ENCODE measurements at regions of chr6 and their contacts with region 1.

Region 1: GRCh38 chr6:109073344-109074132 is 21.1 kb downstream of the SESN1 start:
- DNase-seq: peak; percentile 67 to 74 (median 71)
- H3K4me3 ChIP-seq: no peak overlapping the region
- H3K4me3 Mint-ChIP-seq: peak overlapping the region in 6 of 8 donors; percentile 20 to 71 (median 51)
- H3K27ac ChIP-seq: no peak overlapping the region
- H3K27ac Mint-ChIP-seq: peak overlapping the region in 4 of 7 donors; percentile 1 to 72 (median 34)
- H3K4me1 ChIP-seq: peaks cover 34% of the 10 kb centered on the region
- H3K4me1 Mint-ChIP-seq: peaks cover 24 to 39% (median 34%) of the 10 kb centered on the region in 4 donors
- H3K27me3 ChIP-seq: no peaks in the 10 kb centered on the region
- H3K27me3 Mint-ChIP-seq: no peaks in the 10 kb centered on the region

Region 2: GRCh38 chr6:108222504-108222903 is 851.0 kb before region 1 on chr6:
- CTCF ChIA-PET with region 1: no interaction called
- POLR2A ChIA-PET with region 1: no interaction called
- intact Hi-C with region 1: no loop called
- DNase-seq: no peak
- H3K4me3 ChIP-seq: no peak overlapping the region
- H3K4me3 Mint-ChIP-seq: no peak overlapping the region
- H3K27ac ChIP-seq: no peak overlapping the region
- H3K27ac Mint-ChIP-seq: peak overlapping the region in 3 of 7 donors; percentile 7 to 75 (median 64)
- H3K4me1 ChIP-seq: no peaks in the 10 kb centered on the region
- H3K4me1 Mint-ChIP-seq: peaks cover 7 to 14% (median 10%) of the 10 kb centered on the region in 4 donors
- H3K27me3 ChIP-seq: no peaks in the 10 kb centered on the region
- H3K27me3 Mint-ChIP-seq: no peaks in the 10 kb centered on the region

Region 3: GRCh38 chr6:108541838-108542759 is 531.4 kb before region 1 on chr6:
- CTCF ChIA-PET with region 1: interaction called, 219 read pairs
- POLR2A ChIA-PET with region 1: interaction called, 10 read pairs
- intact Hi-C with region 1: loop called (anchors 1 kb)
- DNase-seq: peak; percentile 71 to 74 (median 73)
- H3K4me3 ChIP-seq: no peak overlapping the region
- H3K4me3 Mint-ChIP-seq: peak overlapping the region in 4 of 8 donors; percentile 16 to 71 (median 56)
- H3K27ac ChIP-seq: no peak overlapping the region
- H3K27ac Mint-ChIP-seq: no peak overlapping the region
- H3K4me1 ChIP-seq: peaks cover 8% of the 10 kb centered on the region
- H3K4me1 Mint-ChIP-seq: peaks cover 6 to 17% (median 8%) of the 10 kb centered on the region in 4 donors
- H3K27me3 ChIP-seq: no peaks in the 10 kb centered on the region
- H3K27me3 Mint-ChIP-seq: peaks cover 4 to 6% of the 10 kb centered on the region in 2 donors

Region 4: DNA sequence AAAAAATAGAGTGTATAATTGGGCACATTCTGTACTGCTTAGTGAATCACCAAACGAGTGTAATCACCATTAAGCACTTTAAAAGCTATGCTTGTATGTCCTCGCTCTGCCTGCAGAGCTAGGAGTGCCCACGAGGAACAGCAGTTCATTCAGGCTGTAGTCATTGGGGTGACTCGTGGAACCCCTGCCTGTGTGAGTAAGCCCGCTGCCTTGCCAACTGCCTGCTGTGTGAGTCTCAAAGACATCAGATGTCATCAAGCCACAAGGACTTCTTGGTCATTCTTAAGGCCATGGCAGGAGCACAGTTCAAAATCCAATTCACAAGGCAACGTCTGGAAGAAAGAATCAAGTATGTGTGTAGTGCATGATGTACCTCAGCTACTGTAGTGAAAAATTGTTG is 452.4 kb before region 1 on chr6:
- CTCF ChIA-PET with region 1: no interaction called
- POLR2A ChIA-PET with region 1: no interaction called
- intact Hi-C with region 1: no loop called
- DNase-seq: no peak
- H3K4me3 ChIP-seq: no peak overlapping the region
- H3K4me3 Mint-ChIP-seq: no peak overlapping the region
- H3K27ac ChIP-seq: no peak overlapping the region
- H3K27ac Mint-ChIP-seq: no peak overlapping the region
- H3K4me1 ChIP-seq: peaks cover 17% of the 10 kb centered on the region
- H3K4me1 Mint-ChIP-seq: peaks cover 28 to 72% (median 47%) of the 10 kb centered on the region in 4 donors
- H3K27me3 ChIP-seq: no peaks in the 10 kb centered on the region
- H3K27me3 Mint-ChIP-seq: no peaks in the 10 kb centered on the region

Region 5: GRCh38 chr6:108835218-108835850 is 238.2 kb before region 1 on chr6:
- CTCF ChIA-PET with region 1: interaction called, 40 read pairs
- POLR2A ChIA-PET with region 1: no interaction called
- intact Hi-C with region 1: loop called (anchors 1 kb)
- DNase-seq: peak; percentile 76 to 78 (median 77)
- H3K4me3 ChIP-seq: no peak overlapping the region
- H3K4me3 Mint-ChIP-seq: no peak overlapping the region
- H3K27ac ChIP-seq: no peak overlapping the region
- H3K27ac Mint-ChIP-seq: peak overlapping the region in 2 of 7 donors; percentile 3 to 43
- H3K4me1 ChIP-seq: peaks cover 15% of the 10 kb centered on the region
- H3K4me1 Mint-ChIP-seq: peaks cover 13 to 26% (median 19%) of the 10 kb centered on the region in 4 donors
- H3K27me3 ChIP-seq: no peaks in the 10 kb centered on the region
- H3K27me3 Mint-ChIP-seq: no peaks in the 10 kb centered on the region

Region 6: DNA sequence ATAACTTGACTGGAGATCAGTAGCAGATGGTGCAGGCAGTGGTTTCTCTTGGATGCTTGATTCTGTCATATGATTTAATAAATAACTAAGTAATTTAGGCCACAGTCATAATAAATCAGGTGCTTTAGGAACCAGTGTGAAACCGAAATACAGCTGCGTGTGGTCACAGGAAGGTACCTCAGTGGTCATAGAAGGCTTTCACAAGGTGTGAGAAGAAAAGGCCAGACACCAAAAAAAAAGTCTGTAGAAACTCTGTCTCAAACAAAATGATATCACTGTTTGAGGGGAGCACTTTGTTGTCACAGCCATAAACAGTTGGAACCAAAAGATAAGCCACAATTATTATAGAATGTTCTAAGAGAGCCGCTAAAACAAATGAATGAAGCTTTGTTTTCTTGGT is 168.8 kb before region 1 on chr6:
- CTCF ChIA-PET with region 1: interaction called, 12 read pairs
- POLR2A ChIA-PET with region 1: interaction called, 3 read pairs
- intact Hi-C with region 1: no loop called
- DNase-seq: no peak
- H3K4me3 ChIP-seq: no peak overlapping the region
- H3K4me3 Mint-ChIP-seq: no peak overlapping the region
- H3K27ac ChIP-seq: no peak overlapping the region
- H3K27ac Mint-ChIP-seq: peak overlapping the region in 2 of 7 donors; percentile 6 to 90
- H3K4me1 ChIP-seq: peaks cover 26% of the 10 kb centered on the region
- H3K4me1 Mint-ChIP-seq: peaks cover 22 to 35% (median 27%) of the 10 kb centered on the region in 4 donors
- H3K27me3 ChIP-seq: no peaks in the 10 kb centered on the region
- H3K27me3 Mint-ChIP-seq: no peaks in the 10 kb centered on the region

Region 7: GRCh38 chr6:108944707-108945680 is 128.5 kb before region 1 on chr6:
- CTCF ChIA-PET with region 1: interaction called, 16 read pairs
- POLR2A ChIA-PET with region 1: interaction called, 3 read pairs
- intact Hi-C with region 1: no loop called
- DNase-seq: no peak
- H3K4me3 ChIP-seq: no peak overlapping the region
- H3K4me3 Mint-ChIP-seq: peak overlapping the region in 3 of 8 donors; percentile 3 to 40 (median 15)
- H3K27ac ChIP-seq: no peak overlapping the region
- H3K27ac Mint-ChIP-seq: peak overlapping the region in 5 of 7 donors; percentile 3 to 24 (median 7)
- H3K4me1 ChIP-seq: peaks cover 37% of the 10 kb centered on the region
- H3K4me1 Mint-ChIP-seq: peaks cover 22 to 66% (median 38%) of the 10 kb centered on the region in 4 donors
- H3K27me3 ChIP-seq: no peaks in the 10 kb centered on the region
- H3K27me3 Mint-ChIP-seq: no peaks in the 10 kb centered on the region

Region 8: GRCh38 chr6:109036574-109037294 is 36.8 kb before region 1 on chr6:
- CTCF ChIA-PET with region 1: interaction called, 40 read pairs
- POLR2A ChIA-PET with region 1: interaction called, 40 read pairs
- intact Hi-C with region 1: no loop called
- DNase-seq: peak in 4 of 5 donors; percentile 21 to 38 (median 34)
- H3K4me3 ChIP-seq: no peak overlapping the region
- H3K4me3 Mint-ChIP-seq: peak overlapping the region in 7 of 8 donors; percentile 2 to 72 (median 55)
- H3K27ac ChIP-seq: no peak overlapping the region
- H3K27ac Mint-ChIP-seq: peak overlapping the region; percentile 19 to 90 (median 74)
- H3K4me1 ChIP-seq: peaks cover 30% of the 10 kb centered on the region
- H3K4me1 Mint-ChIP-seq: peaks cover 31 to 69% (median 42%) of the 10 kb centered on the region in 4 donors
- H3K27me3 ChIP-seq: no peaks in the 10 kb centered on the region
- H3K27me3 Mint-ChIP-seq: no peaks in the 10 kb centered on the region

Region 9: DNA sequence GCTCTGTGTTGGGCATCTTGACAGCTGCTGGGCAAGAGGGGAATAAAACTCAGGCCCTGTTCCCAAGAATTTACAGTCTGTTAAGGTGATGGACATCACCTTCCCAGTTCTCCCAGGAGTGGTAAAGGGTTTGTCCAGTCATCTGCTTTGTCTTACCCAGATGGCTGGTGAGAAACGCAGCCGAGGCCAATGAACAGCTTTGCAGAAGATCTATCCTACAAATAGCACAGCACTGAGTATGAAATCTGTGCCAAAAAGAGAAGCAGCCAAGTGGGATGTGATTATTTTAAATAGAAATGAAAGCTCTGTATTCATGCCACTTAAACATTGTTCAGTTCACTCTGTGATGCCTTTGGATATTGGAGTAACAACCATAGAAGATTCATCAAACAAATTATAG is 1535.6 kb after region 1 on chr6:
- CTCF ChIA-PET with region 1: no interaction called
- POLR2A ChIA-PET with region 1: no interaction called
- intact Hi-C with region 1: no loop called
- DNase-seq: no peak
- H3K4me3 ChIP-seq: no peak overlapping the region
- H3K4me3 Mint-ChIP-seq: no peak overlapping the region
- H3K27ac ChIP-seq: no peak overlapping the region
- H3K27ac Mint-ChIP-seq: peak overlapping the region in 3 of 7 donors; percentile 2 to 20 (median 14)
- H3K4me1 ChIP-seq: no peaks in the 10 kb centered on the region
- H3K4me1 Mint-ChIP-seq: no peaks in the 10 kb centered on the region
- H3K27me3 ChIP-seq: no peaks in the 10 kb centered on the region
- H3K27me3 Mint-ChIP-seq: no peaks in the 10 kb centered on the region

Measured in CD4-positive, alpha-beta memory T cell (primary cell).